Head of caudate nucleus (tissue), 42 donors: ENCODE measurements at regions of chr9 and their contacts with region 1.

Region 1: GRCh38 chr9:81689343-81690190 is at the start of gene TLE1:
- DNase-seq: peak; percentile 98 to 100 (median 99)

Region 2: DNA sequence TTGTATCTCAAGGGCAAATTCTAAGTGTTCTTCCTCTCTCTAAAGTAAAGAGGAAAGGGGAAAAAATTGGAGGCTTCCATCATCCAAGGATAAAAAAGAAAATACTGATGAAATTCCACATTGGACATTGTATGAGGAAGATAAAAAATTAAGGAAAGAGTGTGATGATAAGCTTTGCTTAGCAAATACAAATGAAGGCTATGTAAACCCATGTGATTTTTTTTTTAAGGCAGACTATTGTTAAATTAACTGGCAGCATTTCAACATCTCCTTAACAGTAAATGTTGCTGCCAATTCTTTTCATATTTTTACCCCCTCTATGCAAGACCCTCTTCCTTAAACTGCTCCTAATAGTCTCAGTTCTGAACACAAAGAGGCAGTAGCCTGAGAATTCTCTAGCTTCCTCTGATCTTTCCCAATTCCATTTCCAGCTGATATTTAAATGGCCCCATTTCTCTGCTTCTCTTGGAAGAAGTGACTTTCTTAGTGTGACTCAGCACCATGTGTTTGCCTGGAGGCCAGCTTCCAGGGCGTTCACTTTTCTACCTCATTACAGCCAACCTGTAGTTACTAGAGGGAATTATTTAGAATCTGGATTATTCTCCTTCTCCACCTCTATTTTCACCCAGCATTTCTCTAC is 159.9 kb before region 1 on chr9:
- intact Hi-C with region 1: loop called (anchors 10 kb)
- DNase-seq: no peak

Region 3: GRCh38 chr9:81823672-81824554 is 134.3 kb after region 1 on chr9:
- intact Hi-C with region 1: loop called (anchors 2 kb)
- DNase-seq: peak in 37 of 42 donors; percentile 24 to 89 (median 65)